ENCODE measurements at regions of chr10 and their contacts with region 1.

Region 1: GRCh38 chr10:110137142-110137545 is 70.3 kb upstream of the MXI1 start:
- DNase-seq: no peak
- H3K4me3 ChIP-seq: no peak overlapping the region
- H3K27ac ChIP-seq: peak overlapping the region; percentile 5 to 33
- H3K4me1 ChIP-seq: peaks cover 0 to 15% (median 5%) of the 10 kb centered on the region in 4 donors
- H3K27me3 ChIP-seq: no peaks in the 10 kb centered on the region
- CTCF ChIP-seq: peak; percentile 68 to 96

Region 2: DNA sequence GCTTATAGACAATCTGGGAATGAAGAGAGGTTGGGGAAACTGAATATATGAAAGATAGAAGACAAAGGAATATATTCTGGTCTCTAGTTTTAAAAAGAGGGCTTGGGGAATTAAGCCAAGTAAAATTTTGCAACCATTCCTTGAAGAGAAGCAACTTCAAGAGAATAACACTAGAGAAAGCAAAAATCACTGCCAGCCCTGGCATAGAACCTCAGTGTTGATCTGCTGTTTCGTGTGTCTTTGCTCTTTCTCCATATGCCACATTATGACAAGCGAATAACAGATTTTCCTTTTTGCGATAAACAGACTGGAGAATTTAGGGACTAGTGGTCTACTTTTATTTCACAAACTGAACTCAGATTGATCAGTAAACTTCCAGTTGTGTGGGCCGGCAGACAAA is 346.5 kb before region 1 on chr10:
- intact Hi-C with region 1: no loop called
- DNase-seq: no peak
- H3K4me3 ChIP-seq: no peak overlapping the region
- H3K27ac ChIP-seq: no peak overlapping the region
- H3K4me1 ChIP-seq: no peaks in the 10 kb centered on the region
- H3K27me3 ChIP-seq: no peaks in the 10 kb centered on the region
- CTCF ChIP-seq: no peak

Region 3: DNA sequence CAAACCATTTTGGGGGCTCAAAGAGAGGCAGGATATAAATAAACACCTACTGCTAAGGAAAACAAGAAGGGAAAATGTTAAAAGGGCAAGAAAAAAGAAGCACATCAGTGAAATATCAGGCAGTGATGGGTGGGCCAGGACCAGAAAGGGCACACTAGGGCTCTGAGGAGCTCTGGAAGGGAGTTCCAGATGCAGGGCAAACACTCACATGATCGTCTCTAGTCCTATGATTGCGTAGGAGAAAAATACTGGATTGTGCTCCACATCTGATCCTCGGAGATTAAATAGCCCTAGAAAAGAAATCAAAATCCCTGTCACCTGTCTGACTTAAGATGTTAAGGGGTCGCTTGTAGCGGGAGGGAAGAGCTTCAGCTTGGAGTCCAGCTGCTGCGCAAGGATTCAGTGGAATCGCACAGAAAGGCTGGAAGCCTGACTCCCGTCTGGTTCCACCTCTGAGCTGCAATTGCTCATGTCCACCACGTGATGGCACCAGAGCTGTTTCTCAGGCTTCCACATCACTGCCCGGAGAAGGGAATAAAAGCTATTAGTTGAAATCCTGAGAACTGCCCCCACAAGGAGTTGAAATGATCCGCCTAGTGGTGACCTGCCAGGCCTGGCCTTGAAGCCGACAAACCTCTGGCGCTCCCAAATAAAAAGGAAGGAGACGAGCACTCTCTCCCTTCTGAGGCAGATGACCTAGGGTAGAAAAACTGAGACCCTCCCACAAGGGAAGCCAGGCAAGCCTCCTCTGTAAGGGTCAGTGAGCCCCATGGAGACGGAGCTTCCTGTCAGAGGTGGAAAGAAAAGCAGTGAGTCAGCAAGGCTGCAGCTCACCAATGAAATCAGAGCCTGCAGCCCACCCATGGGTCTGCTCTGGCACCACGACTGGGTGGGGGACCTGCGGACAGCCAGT is 253.0 kb before region 1 on chr10:
- intact Hi-C with region 1: loop called (anchors 10 kb)
- DNase-seq: peak; percentile 71 to 87
- H3K4me3 ChIP-seq: peak overlapping the region in 1 of 2 donors; percentile 14
- H3K27ac ChIP-seq: peak overlapping the region; percentile 54 to 73
- H3K4me1 ChIP-seq: peaks cover 5 to 12% (median 8%) of the 10 kb centered on the region in 4 donors
- H3K27me3 ChIP-seq: no peaks in the 10 kb centered on the region
- CTCF ChIP-seq: peak; percentile 96

Region 4: GRCh38 chr10:110210674-110211464 is 73.7 kb after region 1 on chr10:
- intact Hi-C with region 1: loop called (anchors 5 kb)
- DNase-seq: peak; percentile 96 to 99
- H3K4me3 ChIP-seq: peak overlapping the region; percentile 78 to 87
- H3K27ac ChIP-seq: peak overlapping the region; percentile 96 to 99
- H3K4me1 ChIP-seq: peaks cover 0 to 50% (median 41%) of the 10 kb centered on the region in 4 donors
- H3K27me3 ChIP-seq: no peaks in the 10 kb centered on the region
- CTCF ChIP-seq: no peak

Region 5: DNA sequence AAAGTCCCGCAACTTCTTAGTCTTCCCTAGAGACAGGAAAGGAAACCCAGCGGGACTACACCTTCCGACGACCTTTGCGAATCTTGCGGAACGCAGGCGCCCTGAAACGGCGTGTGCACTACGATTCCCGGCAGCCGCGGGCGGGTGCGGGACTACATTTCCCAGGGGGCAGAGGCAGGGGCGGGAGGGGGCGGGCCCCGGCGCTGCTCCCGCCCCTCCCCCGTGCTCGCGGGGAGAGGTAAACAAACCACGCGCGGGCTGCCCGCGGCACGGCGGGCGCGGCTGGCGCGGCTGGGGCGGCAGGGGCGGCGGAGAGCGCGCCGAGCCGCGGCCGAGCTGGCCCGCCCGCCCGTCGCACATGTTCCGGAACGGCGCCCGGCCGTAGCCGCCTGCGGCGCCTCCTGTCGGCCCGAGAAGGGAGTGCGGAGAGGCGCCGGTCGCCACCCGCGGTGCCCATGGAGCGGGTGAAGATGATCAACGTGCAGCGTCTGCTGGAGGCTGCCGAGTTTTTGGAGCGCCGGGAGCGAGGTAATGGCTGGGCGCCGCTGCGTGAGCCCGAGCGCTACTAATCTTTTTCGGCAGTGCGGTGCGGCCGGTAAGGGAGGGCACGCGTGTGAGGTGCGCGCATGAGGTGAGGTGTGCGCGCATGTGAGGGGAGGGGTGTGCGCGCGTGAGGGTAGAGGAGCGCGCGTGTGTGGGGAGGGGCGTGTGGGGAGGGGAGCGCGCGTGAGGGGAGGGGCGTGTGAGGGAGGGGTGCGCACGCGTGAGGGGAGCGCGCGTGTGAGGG is 88.8 kb after region 1 on chr10:
- intact Hi-C with region 1: loop called (anchors 5 kb)
- DNase-seq: peak; percentile 89 to 96
- H3K4me3 ChIP-seq: peak overlapping the region; percentile 92 to 95
- H3K27ac ChIP-seq: peak overlapping the region; percentile 89 to 93
- H3K4me1 ChIP-seq: peaks cover 0 to 59% (median 42%) of the 10 kb centered on the region in 4 donors
- H3K27me3 ChIP-seq: no peaks in the 10 kb centered on the region
- CTCF ChIP-seq: peak; percentile 66 to 91

Region 6: DNA sequence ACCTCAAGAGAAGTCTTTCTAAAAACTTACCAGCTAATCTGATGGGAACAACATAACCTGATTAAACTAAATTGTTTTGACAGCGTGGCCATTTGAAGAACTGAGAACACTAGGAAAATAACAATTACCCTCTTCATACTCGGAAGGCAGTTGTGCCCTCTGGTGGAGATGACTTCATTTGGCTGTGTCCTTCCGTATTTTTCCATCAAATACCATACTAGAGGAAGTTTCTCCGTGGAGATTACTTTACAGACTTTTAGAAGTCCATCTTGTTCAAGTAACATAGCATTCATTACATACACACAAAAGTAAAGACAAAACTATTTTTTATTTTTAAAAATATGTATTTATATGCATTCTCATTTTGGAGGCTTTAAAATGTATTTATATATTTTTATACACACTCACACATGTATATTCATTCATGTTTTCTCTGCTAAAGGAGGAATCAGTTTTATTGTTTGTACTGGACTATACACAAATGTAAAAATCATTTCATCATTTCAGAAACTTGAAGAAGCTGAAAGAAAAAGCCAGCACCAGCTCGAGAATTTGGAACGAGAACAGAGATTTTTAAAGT is 142.4 kb after region 1 on chr10:
- intact Hi-C with region 1: loop called (anchors 5 kb)
- DNase-seq: peak in 1 of 2 donors; percentile 56
- H3K4me3 ChIP-seq: no peak overlapping the region
- H3K27ac ChIP-seq: peak overlapping the region; percentile 42 to 48
- H3K4me1 ChIP-seq: peaks cover 0 to 64% (median 35%) of the 10 kb centered on the region in 4 donors
- H3K27me3 ChIP-seq: no peaks in the 10 kb centered on the region
- CTCF ChIP-seq: peak; percentile 67 to 86

Region 7: DNA sequence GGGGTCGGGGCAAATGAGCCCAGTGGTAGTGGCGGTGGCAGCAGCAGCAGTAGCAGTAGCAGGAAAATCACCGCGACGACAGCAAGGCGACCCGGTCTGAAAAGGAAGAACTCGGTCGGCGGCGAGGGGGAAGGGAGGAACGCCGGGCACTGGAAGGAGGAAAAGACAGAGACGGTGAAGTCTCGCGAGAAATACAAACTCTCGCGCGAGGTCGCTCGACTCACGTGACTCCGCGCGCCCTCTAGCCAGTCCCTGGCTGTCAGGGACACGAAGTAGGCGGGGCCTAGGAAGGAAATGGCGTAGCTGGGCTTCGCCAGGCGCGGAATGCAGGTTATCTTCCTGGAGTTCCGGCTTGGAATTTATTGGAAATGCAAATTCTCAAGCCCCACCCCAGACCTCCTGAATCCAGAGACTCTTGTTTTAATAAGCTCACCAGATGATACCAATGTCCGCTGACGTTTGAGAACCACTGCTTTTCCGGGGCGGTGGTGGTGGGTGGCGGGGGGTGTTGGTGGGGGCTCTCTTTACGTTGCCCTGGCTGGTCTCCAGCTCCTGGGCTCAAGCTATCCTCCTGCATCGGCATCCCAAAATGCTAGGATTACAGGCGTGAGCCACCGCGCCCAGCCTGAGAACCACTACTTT is 167.8 kb after region 1 on chr10 and contains the start of gene SMNDC1:
- intact Hi-C with region 1: loop called (anchors 5 kb)
- DNase-seq: peak; percentile 96 to 99
- H3K4me3 ChIP-seq: peak within 1 kb of the TSS; percentile 97 to 98
- H3K27ac ChIP-seq: peak within 1 kb of the TSS; percentile 92 to 93
- H3K4me1 ChIP-seq: peaks cover 0 to 48% (median 34%) of the 10 kb centered on the region in 4 donors
- H3K27me3 ChIP-seq: no peaks in the 10 kb centered on the region
- CTCF ChIP-seq: peak in 1 of 2 experiments; percentile 7

Region 8: GRCh38 chr10:110471566-110472139 is 334.5 kb after region 1 on chr10:
- intact Hi-C with region 1: no loop called
- DNase-seq: no peak
- H3K4me3 ChIP-seq: no peak overlapping the region
- H3K27ac ChIP-seq: no peak overlapping the region
- H3K4me1 ChIP-seq: no peaks in the 10 kb centered on the region
- H3K27me3 ChIP-seq: no peaks in the 10 kb centered on the region
- CTCF ChIP-seq: no peak

Measured in tibial artery (tissue), 4 donors.